Activated B cell treated with CpG ODN at 0.5 μM for 24 hours (primary cell): ENCODE measurements at regions of chr20 and their contacts with region 1.

Region 1: GRCh38 chr20:45406259-45407066 is 1.6 kb upstream of the DBNDD2 start:
- DNase-seq: peak; percentile 48
- ATAC-seq: peak; percentile 60
- H3K4me3 Mint-ChIP-seq: peak overlapping the region; percentile 75
- H3K27ac Mint-ChIP-seq: no peak overlapping the region
- H3K4me1 Mint-ChIP-seq: peaks cover 28% of the 10 kb centered on the region
- H3K27me3 Mint-ChIP-seq: no peaks in the 10 kb centered on the region
- CTCF ChIP-seq: no peak

Region 2: DNA sequence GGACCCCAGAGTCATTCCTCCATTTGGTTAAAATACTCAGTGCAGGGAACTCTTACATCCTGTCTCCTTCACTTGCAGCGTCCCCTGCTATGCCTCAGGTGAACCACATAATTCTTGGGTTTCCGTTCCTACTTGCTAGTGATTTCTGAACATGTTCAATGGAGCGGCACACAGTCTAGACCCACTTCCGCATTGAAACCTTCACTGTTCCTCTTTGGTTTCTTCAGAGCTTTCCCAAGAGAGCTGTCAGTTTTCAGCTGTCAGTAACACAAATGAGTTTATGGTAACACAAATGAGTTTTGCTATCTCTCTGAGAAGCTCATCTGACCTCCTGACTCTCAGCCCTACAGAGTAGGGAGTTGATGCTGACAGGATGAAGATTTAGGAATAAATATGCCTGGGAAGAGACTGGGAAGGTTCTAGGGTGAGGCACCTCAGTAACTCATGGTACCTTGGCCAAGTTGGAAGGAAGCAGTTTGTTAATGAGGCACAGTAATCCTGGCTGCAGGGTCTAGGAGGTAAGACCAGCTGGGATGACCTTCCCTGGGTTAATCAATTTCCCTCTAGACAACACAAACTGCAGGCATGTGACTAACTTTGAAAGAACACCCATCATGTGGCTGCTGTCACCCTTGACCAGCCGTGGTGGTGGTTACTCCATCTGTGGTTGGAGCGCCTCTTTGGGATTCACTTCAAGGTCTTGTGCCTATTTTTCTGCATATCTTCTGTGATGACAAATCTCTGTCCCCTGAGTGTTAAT is 38.1 kb before region 1 on chr20:
- CTCF ChIA-PET with region 1: interaction called, 11 read pairs
- POLR2A ChIA-PET with region 1: interaction called, 13 read pairs
- intact Hi-C with region 1: loop called (anchors 1 kb)
- DNase-seq: peak; percentile 52
- ATAC-seq: peak; percentile 82
- H3K4me3 Mint-ChIP-seq: peak overlapping the region; percentile 77
- H3K27ac Mint-ChIP-seq: peak overlapping the region; percentile 86
- H3K4me1 Mint-ChIP-seq: peaks cover 91% of the 10 kb centered on the region
- H3K27me3 Mint-ChIP-seq: no peaks in the 10 kb centered on the region
- CTCF ChIP-seq: no peak

Region 3: GRCh38 chr20:45387274-45387673 is 19.2 kb before region 1 on chr20:
- CTCF ChIA-PET with region 1: no interaction called
- POLR2A ChIA-PET with region 1: no interaction called
- intact Hi-C with region 1: loop called (anchors 2 kb)
- DNase-seq: no peak
- ATAC-seq: no peak
- H3K4me3 Mint-ChIP-seq: no peak overlapping the region
- H3K27ac Mint-ChIP-seq: no peak overlapping the region
- H3K4me1 Mint-ChIP-seq: peaks cover 5% of the 10 kb centered on the region
- H3K27me3 Mint-ChIP-seq: no peaks in the 10 kb centered on the region
- CTCF ChIP-seq: no peak

Region 4: DNA sequence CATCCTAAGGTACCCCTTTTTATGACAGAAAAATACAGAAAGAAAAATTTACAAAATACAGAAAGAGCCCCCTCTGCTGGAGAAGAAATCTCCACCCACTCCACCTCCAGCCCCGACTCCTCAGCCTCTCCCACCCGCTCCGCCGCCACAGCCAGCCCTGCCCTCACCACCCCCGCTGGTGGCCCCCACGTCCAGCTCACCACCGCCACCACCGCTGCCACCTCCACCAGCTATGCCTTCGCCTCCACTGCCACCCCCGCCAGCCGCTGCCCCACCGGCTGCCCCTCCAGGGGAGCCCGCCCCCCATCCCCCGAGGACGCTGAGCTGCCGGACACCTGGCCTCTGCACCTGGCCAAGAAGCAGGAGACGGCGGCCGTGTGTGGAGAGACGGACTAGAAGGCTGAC is 80.8 kb after region 1 on chr20:
- CTCF ChIA-PET with region 1: no interaction called
- POLR2A ChIA-PET with region 1: no interaction called
- intact Hi-C with region 1: no loop called
- DNase-seq: no peak
- ATAC-seq: no peak
- H3K4me3 Mint-ChIP-seq: no peak overlapping the region
- H3K27ac Mint-ChIP-seq: no peak overlapping the region
- H3K4me1 Mint-ChIP-seq: no peaks in the 10 kb centered on the region
- H3K27me3 Mint-ChIP-seq: peaks cover 26% of the 10 kb centered on the region
- CTCF ChIP-seq: no peak

Region 5: DNA sequence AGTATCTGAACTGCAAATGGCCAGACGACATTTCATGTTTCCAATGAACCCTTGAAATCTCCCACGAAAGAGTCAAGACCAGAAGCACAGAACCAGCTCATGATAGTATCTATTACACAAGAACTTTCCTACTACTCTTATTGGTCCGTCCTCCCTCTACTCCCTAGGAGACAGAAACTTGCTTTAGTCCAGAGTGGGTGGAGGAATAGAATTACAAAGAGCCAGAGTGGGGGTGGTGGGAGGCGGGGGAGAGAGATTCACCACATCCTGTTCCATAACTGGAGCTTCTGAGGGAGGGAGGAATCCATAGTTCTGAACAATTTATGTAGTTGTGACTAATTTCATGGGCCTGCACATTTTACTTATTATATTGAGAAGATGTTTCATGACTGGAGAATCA is 204.6 kb after region 1 on chr20:
- CTCF ChIA-PET with region 1: no interaction called
- POLR2A ChIA-PET with region 1: no interaction called
- intact Hi-C with region 1: no loop called
- DNase-seq: no peak
- ATAC-seq: no peak
- H3K4me3 Mint-ChIP-seq: no peak overlapping the region
- H3K27ac Mint-ChIP-seq: no peak overlapping the region
- H3K4me1 Mint-ChIP-seq: no peaks in the 10 kb centered on the region
- H3K27me3 Mint-ChIP-seq: peaks cover 32% of the 10 kb centered on the region
- CTCF ChIP-seq: no peak

Region 6: DNA sequence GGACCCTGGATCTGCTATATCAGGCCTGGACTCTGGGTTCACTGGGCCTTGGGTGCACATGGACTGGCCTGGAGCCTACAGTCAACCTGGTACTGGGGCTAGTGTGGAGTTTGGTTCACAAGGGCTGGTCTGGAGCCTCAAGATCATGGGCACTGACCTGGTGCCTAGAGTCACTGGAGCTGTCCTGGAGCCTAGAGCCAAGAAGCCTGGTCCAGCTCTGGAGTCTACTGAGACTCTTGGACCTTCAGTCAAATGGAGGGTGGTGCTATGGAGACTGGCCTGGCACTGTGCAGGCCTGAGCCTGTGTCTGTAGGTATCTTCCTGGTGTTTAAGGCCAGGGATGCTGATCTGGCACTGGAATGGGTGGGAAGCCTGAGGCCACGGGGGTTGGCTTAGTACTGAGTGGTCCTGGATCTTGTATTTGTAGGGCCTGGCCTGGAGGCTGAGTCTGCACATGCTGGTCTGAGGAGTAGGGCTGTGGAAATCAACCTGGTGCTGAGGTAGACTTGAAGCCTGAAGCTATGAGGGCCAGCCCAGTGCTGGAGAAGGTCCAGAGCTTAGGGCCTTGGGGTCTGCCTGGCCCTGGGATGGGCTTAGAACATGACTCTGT is 241.1 kb after region 1 on chr20:
- CTCF ChIA-PET with region 1: no interaction called
- POLR2A ChIA-PET with region 1: no interaction called
- intact Hi-C with region 1: no loop called
- DNase-seq: no peak
- ATAC-seq: no peak
- H3K4me3 Mint-ChIP-seq: no peak overlapping the region
- H3K27ac Mint-ChIP-seq: no peak overlapping the region
- H3K4me1 Mint-ChIP-seq: no peaks in the 10 kb centered on the region
- H3K27me3 Mint-ChIP-seq: peaks cover 15% of the 10 kb centered on the region
- CTCF ChIP-seq: no peak